ENCODE measurements at regions of chr5 and their contacts with region 1.

Region 1: DNA sequence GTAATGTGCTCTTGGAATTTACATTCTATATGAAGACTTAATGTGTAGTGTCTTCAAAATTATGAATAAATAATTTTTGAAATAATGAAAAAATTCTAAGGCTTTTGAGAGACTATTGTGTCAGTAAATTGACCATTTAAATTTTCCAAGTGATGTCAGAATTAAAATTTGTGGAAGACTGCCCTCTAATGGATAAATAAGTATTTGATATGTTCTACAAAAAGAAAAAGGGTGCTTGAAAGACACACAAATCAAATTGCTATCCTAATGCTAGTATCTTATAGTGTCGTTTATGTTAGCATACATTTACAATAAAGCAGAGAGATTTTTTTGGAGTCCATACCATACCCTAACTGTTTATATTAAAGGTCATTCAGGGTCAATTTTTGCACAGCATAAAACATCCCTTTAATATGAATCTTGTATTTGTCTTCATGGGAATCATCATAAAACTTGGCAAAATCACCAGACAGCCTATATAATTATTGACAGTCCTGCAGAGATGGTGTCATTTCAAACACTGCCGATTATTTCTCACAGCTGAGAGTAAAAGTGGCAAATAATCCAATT is 120.8 kb upstream of the SLC27A6 start:
- DNase-seq: no peak
- ATAC-seq: no peak
- H3K4me3 ChIP-seq: no peak overlapping the region
- H3K27ac ChIP-seq: no peak overlapping the region
- H3K4me1 ChIP-seq: no peaks in the 10 kb centered on the region
- H3K27me3 ChIP-seq: no peaks in the 10 kb centered on the region
- CTCF ChIP-seq: peak in 2 of 3 experiments; percentile 35 to 46; a peak in 3 of 6 replicates
- POLR2A ChIP-seq: no peak
- RAD21 ChIP-seq: peak; percentile 68

Region 2: DNA sequence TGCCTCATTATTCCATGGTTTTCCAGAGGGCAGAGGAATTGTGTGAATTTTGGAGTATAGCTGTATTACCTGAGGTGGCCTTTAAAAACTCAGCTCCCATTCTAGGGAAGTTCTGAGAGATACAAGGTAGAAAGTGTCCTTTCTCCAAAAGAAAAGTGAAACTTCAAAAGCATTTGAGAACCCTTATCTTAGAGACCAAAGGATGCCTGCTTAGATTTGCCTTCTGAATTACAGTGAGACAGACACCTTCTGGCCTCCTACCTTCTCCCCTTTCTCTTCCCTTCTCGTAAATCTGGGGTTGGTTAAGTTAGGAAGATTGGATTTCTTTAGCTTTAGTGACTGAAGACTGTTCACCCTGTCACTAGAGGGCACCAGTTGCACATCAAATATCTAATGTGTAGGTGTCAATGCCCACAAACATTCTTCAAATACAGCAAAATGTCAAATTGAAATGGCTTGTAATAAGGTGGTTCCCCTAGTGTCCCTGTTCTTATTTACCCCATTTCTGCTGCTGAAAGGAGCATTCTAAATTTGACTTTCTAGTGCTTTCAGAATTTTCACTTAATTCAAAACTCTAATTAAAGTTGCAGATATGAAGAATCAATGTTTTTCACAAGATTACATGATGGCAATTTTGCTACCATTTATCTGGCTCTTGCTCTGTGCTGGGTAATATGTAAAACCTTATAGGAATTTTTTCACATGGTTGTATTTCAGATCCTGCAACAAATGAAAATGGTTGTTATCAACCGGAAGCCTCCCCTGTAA is 1280.3 kb before region 1 on chr5:
- CTCF ChIA-PET with region 1: interaction called, 3 read pairs
- POLR2A ChIA-PET with region 1: no interaction called
- RAD21 ChIA-PET with region 1: no interaction called
- intact Hi-C with region 1: loop called (anchors 5 kb)
- DNase-seq: peak; percentile 48
- ATAC-seq: peak; percentile 90
- H3K4me3 ChIP-seq: no peak overlapping the region
- H3K27ac ChIP-seq: no peak overlapping the region
- H3K4me1 ChIP-seq: no peaks in the 10 kb centered on the region
- H3K27me3 ChIP-seq: no peaks in the 10 kb centered on the region
- CTCF ChIP-seq: peak; percentile 52 to 82 (median 69); a peak in 5 of 6 replicates
- POLR2A ChIP-seq: no peak
- RAD21 ChIP-seq: peak; percentile 81

Region 3: DNA sequence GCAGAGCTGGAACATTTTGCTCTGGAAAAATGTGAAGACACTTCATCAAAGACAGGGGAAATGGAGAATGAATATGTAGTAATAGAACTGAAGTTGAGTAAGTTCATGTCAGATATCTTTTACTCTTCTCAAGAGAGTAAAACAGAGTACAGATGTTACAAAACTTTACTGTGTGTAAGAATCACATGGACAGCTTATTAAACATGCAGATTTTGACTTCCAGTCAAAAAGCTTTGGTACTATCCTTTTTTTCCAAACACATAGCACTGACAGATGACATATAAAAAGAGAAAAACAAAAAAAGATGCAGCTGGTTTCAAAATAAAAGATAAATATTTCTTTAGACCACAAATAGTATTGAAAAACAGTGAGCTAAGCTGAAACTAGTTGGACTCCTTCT is 421.8 kb before region 1 on chr5:
- CTCF ChIA-PET with region 1: no interaction called
- POLR2A ChIA-PET with region 1: no interaction called
- RAD21 ChIA-PET with region 1: no interaction called
- intact Hi-C with region 1: no loop called
- DNase-seq: no peak
- ATAC-seq: no peak
- H3K4me3 ChIP-seq: no peak overlapping the region
- H3K27ac ChIP-seq: no peak overlapping the region
- H3K4me1 ChIP-seq: no peaks in the 10 kb centered on the region
- H3K27me3 ChIP-seq: no peaks in the 10 kb centered on the region
- CTCF ChIP-seq: no peak
- POLR2A ChIP-seq: no peak
- RAD21 ChIP-seq: no peak

Region 4: GRCh38 chr5:128566130-128566529 is 278.3 kb before region 1 on chr5:
- CTCF ChIA-PET with region 1: no interaction called
- POLR2A ChIA-PET with region 1: no interaction called
- RAD21 ChIA-PET with region 1: no interaction called
- intact Hi-C with region 1: no loop called
- DNase-seq: no peak
- ATAC-seq: no peak
- H3K4me3 ChIP-seq: no peak overlapping the region
- H3K27ac ChIP-seq: no peak overlapping the region
- H3K4me1 ChIP-seq: no peaks in the 10 kb centered on the region
- H3K27me3 ChIP-seq: no peaks in the 10 kb centered on the region
- CTCF ChIP-seq: no peak
- POLR2A ChIP-seq: no peak
- RAD21 ChIP-seq: no peak

Region 5: DNA sequence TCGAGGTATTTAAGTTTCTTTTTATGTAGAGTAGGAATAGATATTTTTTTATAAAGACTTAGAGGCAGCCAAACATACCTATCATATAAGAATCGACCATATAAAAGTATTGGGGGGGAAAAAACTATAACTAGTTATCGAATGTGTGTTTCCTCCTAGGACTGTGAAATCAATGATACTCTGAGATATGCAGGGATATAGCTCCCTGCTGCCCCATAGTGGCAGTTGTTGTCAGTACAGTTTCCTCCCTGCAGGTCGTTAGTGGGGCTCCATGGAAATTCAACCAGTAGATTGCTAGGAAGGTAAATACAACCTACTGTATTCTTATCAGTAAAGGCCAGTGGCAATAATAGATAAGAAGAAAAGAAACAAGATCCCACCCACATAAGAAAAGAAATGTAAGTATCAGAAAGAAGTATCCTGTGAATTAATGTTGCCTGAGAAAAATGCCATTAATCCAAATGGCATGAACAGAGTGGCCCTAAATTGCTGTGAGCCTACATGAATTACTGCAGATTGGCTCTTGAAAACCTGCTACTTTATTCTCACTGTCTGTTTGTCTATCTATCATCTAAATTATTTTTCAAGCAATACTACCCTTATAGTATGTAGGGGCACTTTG is 169.5 kb before region 1 on chr5:
- CTCF ChIA-PET with region 1: no interaction called
- POLR2A ChIA-PET with region 1: no interaction called
- RAD21 ChIA-PET with region 1: no interaction called
- intact Hi-C with region 1: loop called (anchors 5 kb)
- DNase-seq: peak; percentile 50
- ATAC-seq: peak; percentile 97
- H3K4me3 ChIP-seq: no peak overlapping the region
- H3K27ac ChIP-seq: no peak overlapping the region
- H3K4me1 ChIP-seq: no peaks in the 10 kb centered on the region
- H3K27me3 ChIP-seq: no peaks in the 10 kb centered on the region
- CTCF ChIP-seq: peak; percentile 47 to 89 (median 84); a peak in 5 of 6 replicates
- POLR2A ChIP-seq: no peak
- RAD21 ChIP-seq: peak; percentile 67

Region 6: GRCh38 chr5:129063483-129064113 is 219.2 kb after region 1 on chr5:
- CTCF ChIA-PET with region 1: no interaction called
- POLR2A ChIA-PET with region 1: no interaction called
- RAD21 ChIA-PET with region 1: no interaction called
- intact Hi-C with region 1: no loop called
- DNase-seq: no peak
- ATAC-seq: no peak
- H3K4me3 ChIP-seq: no peak overlapping the region
- H3K27ac ChIP-seq: no peak overlapping the region
- H3K4me1 ChIP-seq: no peaks in the 10 kb centered on the region
- H3K27me3 ChIP-seq: no peaks in the 10 kb centered on the region
- CTCF ChIP-seq: no peak
- POLR2A ChIP-seq: no peak
- RAD21 ChIP-seq: no peak

Measured in HCT116 (cell line).